Astrocyte of the cerebellum (primary cell): ENCODE measurements at regions of chr10 and their contacts with region 1.

Region 1: GRCh38 chr10:48634198-48634983 is 29.5 kb upstream of the ARHGAP22 start:
- DNase-seq: no peak
- H3K4me3 ChIP-seq: no peak overlapping the region
- CTCF ChIP-seq: no peak

Region 2: GRCh38 chr10:48572414-48572813 is 62.0 kb before region 1 on chr10:
- in situ Hi-C with region 1: loop called (anchors 5 kb)
- DNase-seq: no peak
- H3K4me3 ChIP-seq: no peak overlapping the region
- CTCF ChIP-seq: no peak